B cell (primary cell): ENCODE measurements at regions of chr4 and their contacts with region 1.

Region 1: GRCh38 chr4:103091601-103092223 is 7.9 kb downstream of the BDH2 start:
- DNase-seq: peak; percentile 82
- ATAC-seq: peak; percentile 89
- H3K4me3 ChIP-seq: no peak overlapping the region
- H3K4me3 Mint-ChIP-seq: no peak overlapping the region
- H3K27ac ChIP-seq: no peak overlapping the region
- H3K27ac Mint-ChIP-seq: no peak overlapping the region
- H3K4me1 ChIP-seq: peaks cover 0 to 9% of the 10 kb centered on the region in 2 donors
- H3K4me1 Mint-ChIP-seq: peaks cover 12% of the 10 kb centered on the region
- H3K27me3 ChIP-seq: no peaks in the 10 kb centered on the region
- H3K27me3 Mint-ChIP-seq: no peaks in the 10 kb centered on the region
- CTCF ChIP-seq: peak; percentile 89

Region 2: DNA sequence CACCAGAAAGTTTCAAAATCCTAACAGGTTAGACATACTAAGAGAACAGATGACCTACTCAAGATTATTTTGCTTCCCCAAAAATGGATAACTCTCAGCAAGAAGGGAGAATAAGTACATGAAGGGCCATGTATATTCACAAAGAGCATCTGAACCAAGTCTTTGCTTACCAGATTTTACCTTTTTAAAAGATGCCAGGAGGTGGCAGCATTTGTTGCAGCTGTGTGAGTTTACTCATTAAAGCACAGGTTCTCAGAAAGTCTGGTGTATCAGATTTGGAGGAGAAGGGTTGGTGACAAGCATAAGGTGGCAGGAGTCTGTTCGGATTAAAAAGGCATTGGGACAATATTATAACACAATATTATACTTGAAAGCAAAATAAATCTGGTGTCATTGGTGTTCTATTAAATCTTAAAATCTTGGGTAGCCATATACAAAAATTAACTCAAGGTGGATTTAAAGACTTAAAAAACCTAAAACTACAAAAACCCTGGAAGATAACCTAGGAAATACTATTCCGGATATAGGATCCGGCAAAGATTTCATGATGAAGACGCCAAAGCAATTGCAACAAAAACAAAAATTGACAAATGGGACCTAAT is 641.9 kb before region 1 on chr4:
- CTCF ChIA-PET with region 1: interaction called, 9 read pairs
- POLR2A ChIA-PET with region 1: no interaction called
- intact Hi-C with region 1: loop called (anchors 2 kb)
- DNase-seq: peak; percentile 76
- ATAC-seq: peak; percentile 60
- H3K4me3 ChIP-seq: no peak overlapping the region
- H3K4me3 Mint-ChIP-seq: no peak overlapping the region
- H3K27ac ChIP-seq: no peak overlapping the region
- H3K27ac Mint-ChIP-seq: no peak overlapping the region
- H3K4me1 ChIP-seq: peaks cover 4 to 8% of the 10 kb centered on the region in 2 donors
- H3K4me1 Mint-ChIP-seq: peaks cover 5% of the 10 kb centered on the region
- H3K27me3 ChIP-seq: no peaks in the 10 kb centered on the region
- H3K27me3 Mint-ChIP-seq: no peaks in the 10 kb centered on the region
- CTCF ChIP-seq: peak; percentile 71

Region 3: DNA sequence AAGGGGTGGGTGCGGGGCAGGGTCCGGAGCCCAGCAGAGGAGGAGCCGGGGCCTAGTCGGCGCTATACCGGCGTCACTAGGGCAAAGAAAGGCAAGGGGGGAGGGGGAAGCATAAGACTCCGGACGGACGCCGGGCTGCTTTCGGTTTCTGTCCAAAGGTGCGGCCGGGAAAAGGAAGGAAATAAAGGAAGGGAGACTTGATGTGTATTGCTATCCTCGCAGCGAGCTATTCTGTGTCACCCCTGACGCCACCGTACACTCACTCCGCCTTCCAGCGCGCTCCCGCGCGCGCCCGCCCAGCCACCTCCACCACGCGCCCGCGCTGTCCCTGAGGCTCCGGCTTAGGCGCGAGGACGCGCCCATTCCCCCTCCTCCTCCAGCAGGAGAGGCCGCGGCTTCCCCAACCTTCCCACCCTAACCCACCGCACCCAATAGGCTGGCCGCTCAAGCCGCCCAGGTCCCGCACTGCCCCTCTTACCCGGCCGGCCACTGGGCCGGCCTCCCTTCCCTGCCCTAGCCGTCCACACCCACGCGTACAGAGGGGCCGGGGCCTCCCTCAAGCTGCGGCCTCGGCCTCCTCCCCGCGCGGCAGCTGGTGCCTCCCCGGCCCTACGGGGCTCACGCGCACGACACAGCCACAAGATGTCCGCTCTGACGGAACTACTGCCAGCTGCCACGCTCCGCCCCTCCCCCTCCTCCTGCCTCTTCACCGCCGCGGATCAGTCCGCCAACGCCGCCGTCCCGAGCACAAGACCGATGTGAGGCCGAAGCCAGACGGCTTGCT is 264.6 kb before region 1 on chr4 and contains the start of gene UBE2D3:
- CTCF ChIA-PET with region 1: interaction called, 3 read pairs
- POLR2A ChIA-PET with region 1: no interaction called
- intact Hi-C with region 1: loop called (anchors 1 kb)
- DNase-seq: peak; percentile 99
- ATAC-seq: peak; percentile 48
- H3K4me3 ChIP-seq: peak within 1 kb of the TSS; percentile 96 to 100 (median 98)
- H3K4me3 Mint-ChIP-seq: no peak within 1 kb of the TSS
- H3K27ac ChIP-seq: peak within 1 kb of the TSS; percentile 100
- H3K27ac Mint-ChIP-seq: no peak within 1 kb of the TSS
- H3K4me1 ChIP-seq: peaks cover 33 to 34% of the 10 kb centered on the region in 2 donors
- H3K4me1 Mint-ChIP-seq: peaks cover 38% of the 10 kb centered on the region
- H3K27me3 ChIP-seq: no peaks in the 10 kb centered on the region
- H3K27me3 Mint-ChIP-seq: no peaks in the 10 kb centered on the region
- CTCF ChIP-seq: no peak
- total RNA-seq, gene UBE2D3: 261 and 264 TPM in 2 replicates

Region 4: DNA sequence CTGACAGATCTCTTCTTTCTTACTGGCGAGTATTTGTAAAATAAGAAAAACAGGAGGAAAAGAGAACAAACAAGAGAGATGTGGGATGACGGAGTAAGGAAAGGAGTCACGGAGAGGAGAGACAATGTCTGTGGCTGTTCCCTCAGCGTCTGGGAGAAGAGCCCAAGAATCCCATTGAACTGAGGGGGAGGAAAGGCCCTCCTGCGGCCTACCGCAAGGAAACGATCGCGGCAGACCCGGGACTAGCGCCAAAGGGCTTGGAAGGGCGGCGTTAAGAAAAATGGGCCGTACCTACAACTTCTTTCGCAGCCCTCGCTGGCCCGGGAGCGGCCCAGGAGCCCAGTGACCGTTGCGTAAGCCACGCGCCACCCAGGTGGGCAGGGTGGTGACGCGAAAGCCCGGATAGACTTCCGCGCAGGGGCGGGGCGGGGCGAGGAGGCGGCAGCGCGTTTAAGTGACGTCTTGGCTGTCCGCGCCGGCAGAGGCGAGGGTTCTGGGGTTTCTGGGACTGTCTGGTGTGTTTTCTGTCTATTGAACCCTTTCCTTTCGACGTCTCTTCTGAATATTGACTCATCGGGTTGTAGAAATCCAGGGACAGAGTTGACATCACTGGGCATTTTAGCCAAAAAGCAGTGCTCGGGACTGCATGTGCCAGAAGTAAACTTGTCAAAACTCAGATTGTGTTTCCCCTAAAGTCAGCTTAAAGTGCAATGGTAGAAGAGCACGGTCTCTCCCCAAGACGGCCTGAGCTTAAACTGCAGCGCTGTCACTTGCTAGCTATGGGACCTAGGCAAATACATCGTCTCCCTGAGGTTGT is 72.2 kb before region 1 on chr4 and contains the start of gene SLC9B1:
- CTCF ChIA-PET with region 1: interaction called, 3 read pairs
- POLR2A ChIA-PET with region 1: no interaction called
- intact Hi-C with region 1: loop called (anchors 2 kb)
- DNase-seq: peak; percentile 94
- ATAC-seq: peak; percentile 98
- H3K4me3 ChIP-seq: peak within 1 kb of the TSS; percentile 65 to 92 (median 82)
- H3K4me3 Mint-ChIP-seq: peak within 1 kb of the TSS; percentile 96
- H3K27ac ChIP-seq: peak within 1 kb of the TSS; percentile 94 to 98
- H3K27ac Mint-ChIP-seq: peak within 1 kb of the TSS; percentile 95
- H3K4me1 ChIP-seq: peaks cover 17 to 21% of the 10 kb centered on the region in 2 donors
- H3K4me1 Mint-ChIP-seq: peaks cover 27% of the 10 kb centered on the region
- H3K27me3 ChIP-seq: no peaks in the 10 kb centered on the region
- H3K27me3 Mint-ChIP-seq: no peaks in the 10 kb centered on the region
- CTCF ChIP-seq: no peak
- total RNA-seq, gene SLC9B1: 1.9 and 2.1 TPM in 2 replicates

Region 5: DNA sequence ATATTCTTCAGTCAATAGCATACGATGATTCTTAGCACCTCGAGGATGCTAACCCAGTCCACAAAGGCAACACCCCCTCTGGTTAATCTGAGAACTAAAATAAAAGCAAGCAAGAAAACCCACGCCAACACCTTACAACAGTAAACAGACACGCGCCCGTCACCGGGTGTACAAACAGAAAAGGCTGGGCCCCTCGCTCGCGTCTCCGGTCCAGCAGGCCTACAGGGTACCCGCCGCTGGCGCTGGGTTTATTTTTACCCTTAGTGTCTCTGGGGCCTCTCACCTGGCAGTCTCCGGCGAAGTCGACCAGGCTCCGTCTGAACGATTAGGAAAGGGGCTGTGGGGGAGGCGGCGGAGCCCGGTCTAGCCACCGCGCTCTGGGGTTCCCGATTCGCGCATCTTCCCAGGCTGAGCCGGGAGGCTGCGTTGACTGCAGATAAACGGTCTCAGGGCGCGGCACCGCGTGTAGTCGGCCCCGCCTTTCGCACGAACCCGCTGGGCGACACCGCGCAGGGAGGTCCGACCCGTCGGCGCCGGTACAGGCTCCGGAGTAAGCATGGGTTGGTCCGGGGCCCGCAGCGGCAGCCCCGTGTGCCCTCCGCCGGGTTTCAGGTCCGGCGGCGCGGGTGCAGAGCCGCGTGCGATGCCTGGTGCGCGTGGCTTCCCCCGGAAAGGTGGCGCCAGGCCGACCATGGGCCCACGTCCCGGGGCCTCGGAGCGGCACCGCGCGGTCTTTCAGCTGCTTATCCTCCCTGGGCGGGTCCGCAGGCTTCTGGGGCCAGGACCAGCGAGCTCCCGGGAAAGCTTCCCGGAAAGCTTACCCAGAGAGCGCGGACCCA is 15.6 kb before region 1 on chr4:
- CTCF ChIA-PET with region 1: interaction called, 97 read pairs
- POLR2A ChIA-PET with region 1: interaction called, 4 read pairs
- intact Hi-C with region 1: loop called (anchors 1 kb)
- DNase-seq: peak; percentile 78
- ATAC-seq: peak; percentile 55
- H3K4me3 ChIP-seq: peak overlapping the region; percentile 65 to 83 (median 80)
- H3K4me3 Mint-ChIP-seq: peak overlapping the region; percentile 82
- H3K27ac ChIP-seq: peak overlapping the region; percentile 92
- H3K27ac Mint-ChIP-seq: peak overlapping the region; percentile 89
- H3K4me1 ChIP-seq: peaks cover 27 to 31% of the 10 kb centered on the region in 2 donors
- H3K4me1 Mint-ChIP-seq: peaks cover 35% of the 10 kb centered on the region
- H3K27me3 ChIP-seq: no peaks in the 10 kb centered on the region
- H3K27me3 Mint-ChIP-seq: no peaks in the 10 kb centered on the region
- CTCF ChIP-seq: peak; percentile 12

Region 6: DNA sequence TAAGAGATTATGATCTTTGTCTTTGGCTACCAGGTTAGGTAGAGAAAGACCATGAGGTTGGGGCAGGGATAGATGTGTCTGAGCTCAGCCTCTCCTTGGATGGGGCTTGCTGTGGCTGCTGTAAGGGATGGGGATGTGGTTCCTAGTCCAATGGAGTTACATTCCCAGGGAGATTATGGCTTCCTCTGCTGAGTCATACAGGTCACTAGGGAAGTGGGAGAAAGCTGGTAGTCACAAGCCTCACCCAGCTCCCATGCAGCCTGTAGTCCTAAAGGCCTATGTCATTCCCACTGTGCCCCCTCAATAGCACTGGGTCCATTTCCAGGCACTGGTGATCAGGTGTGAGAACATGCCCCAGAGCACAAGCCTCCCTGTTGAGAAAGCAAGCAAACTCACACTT is 177.0 kb after region 1 on chr4:
- CTCF ChIA-PET with region 1: no interaction called
- POLR2A ChIA-PET with region 1: no interaction called
- intact Hi-C with region 1: no loop called
- DNase-seq: no peak
- ATAC-seq: no peak
- H3K4me3 ChIP-seq: no peak overlapping the region
- H3K4me3 Mint-ChIP-seq: no peak overlapping the region
- H3K27ac ChIP-seq: no peak overlapping the region
- H3K27ac Mint-ChIP-seq: no peak overlapping the region
- H3K4me1 ChIP-seq: no peaks in the 10 kb centered on the region
- H3K4me1 Mint-ChIP-seq: no peaks in the 10 kb centered on the region
- H3K27me3 ChIP-seq: no peaks in the 10 kb centered on the region
- H3K27me3 Mint-ChIP-seq: peaks cover 6% of the 10 kb centered on the region
- CTCF ChIP-seq: no peak

Region 7: DNA sequence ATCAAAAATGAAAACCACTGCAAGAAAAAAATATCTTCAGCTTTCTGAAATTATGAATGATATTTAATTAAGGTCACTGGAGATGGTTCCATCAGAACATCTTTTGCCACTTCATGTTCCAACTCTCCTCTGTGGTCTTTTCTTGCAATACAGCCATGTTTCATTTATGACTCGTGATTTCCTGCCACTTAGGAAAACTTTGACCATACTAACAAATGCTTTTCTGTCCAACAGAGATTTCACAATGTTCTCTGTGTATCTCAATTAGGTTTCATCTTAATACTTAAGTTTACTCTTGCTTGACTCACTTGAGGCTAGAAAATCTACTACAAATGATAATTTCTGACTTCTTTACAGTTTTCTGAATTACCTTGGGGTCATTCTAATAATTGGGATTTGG is 1072.1 kb after region 1 on chr4:
- CTCF ChIA-PET with region 1: no interaction called
- POLR2A ChIA-PET with region 1: no interaction called
- intact Hi-C with region 1: no loop called
- DNase-seq: no peak
- ATAC-seq: no peak
- H3K4me3 ChIP-seq: no peak overlapping the region
- H3K4me3 Mint-ChIP-seq: no peak overlapping the region
- H3K27ac ChIP-seq: no peak overlapping the region
- H3K27ac Mint-ChIP-seq: no peak overlapping the region
- H3K4me1 ChIP-seq: no peaks in the 10 kb centered on the region
- H3K4me1 Mint-ChIP-seq: no peaks in the 10 kb centered on the region
- H3K27me3 ChIP-seq: no peaks in the 10 kb centered on the region
- H3K27me3 Mint-ChIP-seq: no peaks in the 10 kb centered on the region
- CTCF ChIP-seq: no peak